Mammary epithelial cell (primary cell): ENCODE measurements at regions of chr12 and their contacts with region 1.

Region 1: GRCh38 chr12:109069307-109070231 is 17.2 kb downstream of the USP30 start:
- DNase-seq: no peak
- H3K4me3 ChIP-seq: no peak overlapping the region
- H3K27ac ChIP-seq: no peak overlapping the region
- H3K4me1 ChIP-seq: no peaks in the 10 kb centered on the region
- H3K27me3 ChIP-seq: no peaks in the 10 kb centered on the region
- CTCF ChIP-seq: no peak

Region 2: GRCh38 chr12:108980831-108981618 is 88.5 kb before region 1 on chr12:
- CTCF ChIA-PET with region 1: no interaction called
- dilution Hi-C with region 1: loop called (anchors 5 kb)
- in situ Hi-C with region 1: no loop called
- intact Hi-C with region 1: no loop called
- DNase-seq: no peak
- H3K4me3 ChIP-seq: no peak overlapping the region
- H3K27ac ChIP-seq: no peak overlapping the region
- H3K4me1 ChIP-seq: no peaks in the 10 kb centered on the region
- H3K27me3 ChIP-seq: no peaks in the 10 kb centered on the region
- CTCF ChIP-seq: no peak

Region 3: DNA sequence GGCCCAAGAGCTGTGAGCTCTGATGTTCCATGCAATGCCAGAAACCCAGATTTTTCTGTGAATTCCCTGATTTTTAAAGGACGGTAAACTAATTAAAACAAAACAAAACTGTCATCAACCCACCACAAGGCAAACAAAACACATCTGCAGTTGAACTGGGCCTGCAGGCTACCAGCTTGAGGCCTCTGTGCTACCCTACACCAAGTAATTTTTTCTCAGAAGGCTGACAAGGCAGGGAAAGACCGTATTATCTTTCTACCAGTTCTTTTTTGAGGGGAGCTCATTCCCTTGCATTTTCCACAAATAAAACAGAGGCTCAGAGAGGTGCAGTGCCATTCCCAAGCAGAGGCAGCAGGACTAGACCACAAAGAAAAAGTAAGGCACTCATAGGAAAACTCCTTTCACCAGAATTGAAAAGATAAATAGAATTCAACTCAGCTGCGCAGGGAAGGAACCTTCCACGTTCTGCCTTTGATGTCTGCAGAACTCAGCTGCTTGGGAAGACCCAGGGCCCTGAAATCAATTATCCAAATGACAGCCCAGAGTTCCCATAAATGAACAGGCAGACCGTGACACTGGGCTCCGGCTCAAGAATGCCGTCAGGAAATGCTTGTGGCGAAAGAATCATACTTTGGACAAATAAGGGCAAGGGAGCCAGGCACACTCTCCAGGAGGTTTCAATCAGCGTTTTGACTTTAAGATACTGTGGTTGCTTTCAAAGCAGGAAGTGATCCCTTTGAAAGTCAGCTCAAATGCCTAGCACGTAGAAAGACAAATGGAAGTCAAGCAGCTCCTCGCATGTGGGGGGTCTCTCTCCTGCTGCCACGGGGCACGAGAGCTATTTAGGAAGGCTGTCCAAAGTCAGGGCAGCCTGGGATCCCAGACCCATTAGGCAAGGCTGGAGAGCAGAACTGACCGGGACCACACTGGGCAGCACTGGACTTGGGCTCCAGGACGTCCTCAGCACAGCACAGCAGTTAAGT is 393.4 kb after region 1 on chr12:
- CTCF ChIA-PET with region 1: no interaction called
- dilution Hi-C with region 1: no loop called
- in situ Hi-C with region 1: no loop called
- intact Hi-C with region 1: no loop called
- DNase-seq: peak; percentile 76
- H3K4me3 ChIP-seq: peak overlapping the region in 2 of 3 experiments; percentile 6 to 10
- H3K27ac ChIP-seq: peak overlapping the region; percentile 62
- H3K4me1 ChIP-seq: peaks cover 48% of the 10 kb centered on the region
- H3K27me3 ChIP-seq: no peaks in the 10 kb centered on the region
- CTCF ChIP-seq: no peak